ENCODE measurements at regions of chr14 and their contacts with region 1.

Region 1: DNA sequence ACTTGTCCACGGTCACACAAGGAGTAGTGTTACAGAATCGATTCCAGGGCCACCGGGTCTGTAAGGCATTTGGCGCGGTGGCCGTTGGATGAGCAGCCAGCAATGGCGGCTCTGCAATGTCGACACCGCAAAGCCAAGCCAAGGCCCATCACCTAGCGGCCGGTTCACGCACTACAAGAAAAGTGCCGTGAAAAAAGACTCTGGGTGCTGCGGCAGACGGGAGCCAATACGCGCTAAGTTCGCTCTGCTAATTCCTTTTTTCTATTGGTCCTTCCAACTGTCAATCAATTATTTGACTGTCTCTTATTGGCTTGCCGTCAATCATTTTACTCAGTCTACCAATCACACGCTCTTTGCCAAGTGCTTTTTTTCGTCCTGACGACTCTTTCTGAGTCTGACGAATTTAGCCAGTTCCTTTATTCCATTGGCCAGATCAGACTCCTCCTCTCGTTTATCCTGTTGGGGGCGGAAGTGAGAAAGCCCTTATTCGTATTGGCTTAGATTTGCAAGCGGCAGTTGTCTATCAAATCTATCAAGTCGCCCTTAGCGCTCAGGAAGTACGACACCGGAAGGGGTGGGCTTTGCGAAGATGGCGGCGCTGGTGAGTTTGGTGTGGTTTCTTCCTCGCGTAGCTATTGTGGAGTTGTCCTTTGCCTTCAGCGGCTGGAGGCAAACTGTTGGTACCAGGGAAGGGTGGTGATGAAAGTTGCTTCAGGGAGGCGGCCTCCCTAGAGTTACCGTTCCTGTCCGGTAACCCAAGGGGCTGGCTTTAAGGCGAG is at the start of gene NGDN:
- DNase-seq: peak; percentile 100
- ATAC-seq: peak; percentile 98
- H3K4me3 ChIP-seq: peak within 1 kb of the TSS; percentile 90 to 94 (median 93)
- H3K27ac ChIP-seq: peak within 1 kb of the TSS; percentile 70
- H3K4me1 ChIP-seq: peaks cover 14% of the 10 kb centered on the region
- H3K27me3 ChIP-seq: peaks cover 0 to 4% of the 10 kb centered on the region in 2 experiments; a peak in 1 of 5 replicates
- CTCF ChIP-seq: peak; percentile 62
- EP300 ChIP-seq: peak in 1 of 2 experiments; percentile 21; a peak in 2 of 4 replicates
- POLR2A ChIP-seq: peak; percentile 96 to 97
- RAD21 ChIP-seq: peak; percentile 72
- total RNA-seq, gene NGDN: 216 and 241 TPM in 2 replicates

Region 2: DNA sequence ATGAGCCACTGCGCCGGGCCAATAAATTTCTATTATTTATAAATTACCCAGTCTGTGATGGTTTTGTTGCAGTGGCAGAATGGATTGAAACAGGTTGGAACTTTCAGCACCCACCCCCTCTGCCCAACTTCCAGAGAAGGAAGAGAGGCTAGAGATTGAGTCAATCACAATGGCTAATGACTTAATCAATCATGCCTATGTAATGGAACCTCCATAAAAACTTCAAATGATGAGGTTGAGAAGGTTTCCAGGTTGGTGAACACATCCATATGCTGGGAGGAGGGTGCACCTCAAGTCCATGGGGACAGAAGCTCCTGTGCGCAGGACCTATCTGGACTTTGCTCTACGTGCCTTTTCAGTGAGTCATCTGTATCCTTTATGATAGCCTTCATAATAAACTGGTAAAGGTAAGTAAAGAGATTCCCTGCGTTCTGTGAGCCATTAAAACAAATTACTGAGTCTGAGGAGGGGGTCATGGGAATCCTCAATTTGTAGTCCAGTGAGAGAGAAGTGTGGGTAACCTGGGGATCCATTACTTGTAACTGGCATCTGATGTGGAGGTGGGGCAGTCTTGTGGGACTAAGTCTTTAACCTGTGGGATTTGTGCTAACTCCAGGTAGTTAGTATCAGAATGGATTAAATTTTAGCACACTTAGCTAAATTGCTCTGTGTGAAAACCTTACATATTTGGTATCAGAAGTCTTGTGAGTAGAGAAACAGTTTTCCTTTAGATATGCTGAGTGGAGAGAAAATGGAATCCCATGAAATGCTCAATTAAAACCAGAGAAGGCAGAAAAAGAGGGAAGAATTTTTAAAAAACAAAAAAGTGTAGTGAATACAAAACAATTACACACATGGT is 11.5 kb before region 1 on chr14:
- CTCF ChIA-PET with region 1: no interaction called
- POLR2A ChIA-PET with region 1: interaction called, 6 read pairs
- in situ Hi-C with region 1: no loop called
- intact Hi-C with region 1: loop called (anchors 1 kb)
- DNase-seq: peak; percentile 96
- ATAC-seq: peak; percentile 97
- H3K4me3 ChIP-seq: no peak overlapping the region
- H3K27ac ChIP-seq: no peak overlapping the region
- H3K4me1 ChIP-seq: peaks cover 32% of the 10 kb centered on the region
- H3K27me3 ChIP-seq: no peaks in the 10 kb centered on the region
- CTCF ChIP-seq: no peak
- EP300 ChIP-seq: peak in 1 of 2 experiments; percentile 51; a peak in 1 of 4 replicates
- POLR2A ChIP-seq: no peak
- RAD21 ChIP-seq: no peak

Region 3: GRCh38 chr14:23629832-23630396 is 160.6 kb after region 1 on chr14:
- CTCF ChIA-PET with region 1: no interaction called
- POLR2A ChIA-PET with region 1: no interaction called
- in situ Hi-C with region 1: no loop called
- intact Hi-C with region 1: no loop called
- DNase-seq: no peak
- ATAC-seq: no peak
- H3K4me3 ChIP-seq: no peak overlapping the region
- H3K27ac ChIP-seq: no peak overlapping the region
- H3K4me1 ChIP-seq: peaks cover 61% of the 10 kb centered on the region
- H3K27me3 ChIP-seq: no peaks in the 10 kb centered on the region
- CTCF ChIP-seq: no peak
- EP300 ChIP-seq: no peak
- POLR2A ChIP-seq: no peak
- RAD21 ChIP-seq: no peak

Region 4: DNA sequence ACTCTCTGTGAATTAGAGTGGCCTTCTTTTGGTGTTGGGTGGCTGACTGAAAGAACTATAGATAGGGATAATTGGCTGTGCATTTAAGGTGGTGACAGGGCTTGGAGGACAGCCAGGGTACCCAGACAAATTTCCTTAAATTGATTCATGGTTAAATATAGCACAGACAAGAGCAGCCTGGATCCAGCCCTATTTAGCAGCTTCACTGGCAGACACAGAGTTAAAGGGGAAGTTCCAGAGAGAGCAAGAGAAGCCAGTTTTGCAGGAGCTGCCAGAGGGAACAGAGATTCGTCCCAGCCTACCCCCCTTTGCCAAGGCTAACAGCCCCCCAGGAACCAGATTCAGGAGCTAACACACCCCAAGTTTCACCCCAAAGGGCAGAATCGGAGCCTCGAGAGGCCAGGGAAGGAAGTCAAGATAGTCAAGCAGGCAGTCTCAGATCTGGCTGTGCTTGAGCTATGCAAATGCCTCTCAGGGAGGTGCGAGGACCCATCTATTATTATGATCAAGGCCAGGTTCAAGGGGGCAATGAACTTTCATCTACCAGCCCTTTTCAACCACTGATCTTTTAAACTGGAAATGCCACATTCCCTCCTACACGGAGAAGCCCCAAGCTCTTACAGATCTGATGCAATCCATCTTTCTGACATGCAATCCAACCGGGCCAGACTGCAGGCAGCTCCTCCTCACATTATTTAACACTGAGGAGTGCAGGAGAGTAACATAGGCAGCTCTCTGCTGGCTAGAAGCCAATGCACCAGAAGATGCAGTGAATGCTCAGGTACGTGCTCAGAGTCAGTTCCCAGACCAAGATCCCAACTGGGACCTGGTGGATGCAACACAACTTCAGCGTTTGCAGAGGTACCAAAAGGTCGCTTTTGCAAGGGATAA is 225.0 kb after region 1 on chr14:
- CTCF ChIA-PET with region 1: no interaction called
- POLR2A ChIA-PET with region 1: no interaction called
- in situ Hi-C with region 1: no loop called
- intact Hi-C with region 1: no loop called
- DNase-seq: peak; percentile 70
- ATAC-seq: peak; percentile 76
- H3K4me3 ChIP-seq: peak overlapping the region; percentile 14 to 43 (median 25); a peak in 5 of 6 replicates
- H3K27ac ChIP-seq: peak overlapping the region; percentile 37
- H3K4me1 ChIP-seq: peaks cover 65% of the 10 kb centered on the region
- H3K27me3 ChIP-seq: no peaks in the 10 kb centered on the region
- CTCF ChIP-seq: no peak
- EP300 ChIP-seq: peak; percentile 34 to 76; a peak in 3 of 4 replicates
- POLR2A ChIP-seq: no peak
- RAD21 ChIP-seq: no peak

Measured in HepG2 (cell line).